ENCODE measurements at regions of chr12 and their contacts with region 1.

Region 1: GRCh38 chr12:51923501-51924271 is 16.4 kb downstream of the ACVRL1 start:
- DNase-seq: peak in 1 of 2 experiments; percentile 49
- ATAC-seq: peak; percentile 75 to 93; a peak in 4 of 6 replicates
- H3K4me3 ChIP-seq: no peak overlapping the region
- H3K27ac ChIP-seq: peak overlapping the region in 1 of 2 experiments; percentile 58; a peak in 2 of 6 replicates
- H3K4me1 ChIP-seq: peaks cover 7% of the 10 kb centered on the region; the same call in 2 of the 3 replicates
- CTCF ChIP-seq: peak; percentile 80
- EP300 ChIP-seq: no peak
- POLR2A ChIP-seq: no peak
- RAD21 ChIP-seq: peak; percentile 31 to 34; a peak in 3 of 5 replicates

Region 2: DNA sequence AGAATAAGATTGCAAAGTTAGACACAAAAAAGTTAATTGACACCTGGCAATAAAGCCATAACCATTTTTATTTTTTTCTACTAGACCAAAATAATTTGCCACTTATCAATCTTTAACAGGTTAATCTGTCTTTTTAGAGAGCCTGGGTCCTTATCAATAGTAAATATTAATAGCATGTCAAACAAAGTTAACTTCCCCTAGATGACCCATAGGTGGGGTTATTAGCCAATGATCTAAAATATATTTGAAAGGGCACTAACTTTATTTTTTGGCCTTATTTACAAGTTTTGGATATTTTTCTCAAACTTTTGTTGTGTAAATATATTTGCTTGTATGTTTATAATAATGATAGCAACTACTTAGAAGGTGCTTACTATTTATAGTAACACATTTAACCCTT is 31.8 kb before region 1 on chr12:
- CTCF ChIA-PET with region 1: interaction called, 34 read pairs
- POLR2A ChIA-PET with region 1: no interaction called
- DNase-seq: peak in 1 of 2 experiments; percentile 39
- ATAC-seq: no peak
- H3K4me3 ChIP-seq: no peak overlapping the region
- H3K27ac ChIP-seq: no peak overlapping the region
- H3K4me1 ChIP-seq: no peaks in the 10 kb centered on the region
- CTCF ChIP-seq: peak; percentile 33; the same call in 2 of the 3 replicates
- EP300 ChIP-seq: no peak
- POLR2A ChIP-seq: no peak
- RAD21 ChIP-seq: peak; percentile 43 to 50

Region 3: GRCh38 chr12:51898937-51899336 is 24.7 kb before region 1 on chr12:
- CTCF ChIA-PET with region 1: interaction called, 32 read pairs
- POLR2A ChIA-PET with region 1: no interaction called
- DNase-seq: no peak
- ATAC-seq: no peak
- H3K4me3 ChIP-seq: no peak overlapping the region
- H3K27ac ChIP-seq: no peak overlapping the region
- H3K4me1 ChIP-seq: no peaks in the 10 kb centered on the region
- CTCF ChIP-seq: no peak
- EP300 ChIP-seq: no peak
- POLR2A ChIP-seq: no peak
- RAD21 ChIP-seq: no peak

Region 4: GRCh38 chr12:51905471-51906429 is 17.9 kb before region 1 on chr12:
- CTCF ChIA-PET with region 1: interaction called, 32 read pairs
- POLR2A ChIA-PET with region 1: no interaction called
- DNase-seq: no peak
- ATAC-seq: peak in 1 of 2 experiments; percentile 9; a peak in 2 of 6 replicates
- H3K4me3 ChIP-seq: no peak overlapping the region
- H3K27ac ChIP-seq: no peak overlapping the region
- H3K4me1 ChIP-seq: no peaks in the 10 kb centered on the region
- CTCF ChIP-seq: no peak
- EP300 ChIP-seq: no peak
- POLR2A ChIP-seq: no peak
- RAD21 ChIP-seq: no peak

Region 5: GRCh38 chr12:51911788-51912711 is 11.6 kb before region 1 on chr12:
- CTCF ChIA-PET with region 1: interaction called, 32 read pairs
- POLR2A ChIA-PET with region 1: no interaction called
- DNase-seq: no peak
- ATAC-seq: peak in 1 of 2 experiments; percentile 36; a peak in 3 of 6 replicates
- H3K4me3 ChIP-seq: no peak overlapping the region
- H3K27ac ChIP-seq: no peak overlapping the region
- H3K4me1 ChIP-seq: no peaks in the 10 kb centered on the region
- CTCF ChIP-seq: no peak
- EP300 ChIP-seq: no peak
- POLR2A ChIP-seq: no peak
- RAD21 ChIP-seq: no peak

Region 6: GRCh38 chr12:51941011-51941581 is 17.4 kb after region 1 on chr12:
- CTCF ChIA-PET with region 1: interaction called, 69 read pairs
- POLR2A ChIA-PET with region 1: no interaction called
- DNase-seq: no peak
- ATAC-seq: no peak
- H3K4me3 ChIP-seq: no peak overlapping the region
- H3K27ac ChIP-seq: no peak overlapping the region
- H3K4me1 ChIP-seq: no peaks in the 10 kb centered on the region
- CTCF ChIP-seq: no peak
- EP300 ChIP-seq: no peak
- POLR2A ChIP-seq: no peak
- RAD21 ChIP-seq: no peak